Prostate gland (tissue), 2 donors: ENCODE measurements at regions of chr3 and their contacts with region 1.

Region 1: DNA sequence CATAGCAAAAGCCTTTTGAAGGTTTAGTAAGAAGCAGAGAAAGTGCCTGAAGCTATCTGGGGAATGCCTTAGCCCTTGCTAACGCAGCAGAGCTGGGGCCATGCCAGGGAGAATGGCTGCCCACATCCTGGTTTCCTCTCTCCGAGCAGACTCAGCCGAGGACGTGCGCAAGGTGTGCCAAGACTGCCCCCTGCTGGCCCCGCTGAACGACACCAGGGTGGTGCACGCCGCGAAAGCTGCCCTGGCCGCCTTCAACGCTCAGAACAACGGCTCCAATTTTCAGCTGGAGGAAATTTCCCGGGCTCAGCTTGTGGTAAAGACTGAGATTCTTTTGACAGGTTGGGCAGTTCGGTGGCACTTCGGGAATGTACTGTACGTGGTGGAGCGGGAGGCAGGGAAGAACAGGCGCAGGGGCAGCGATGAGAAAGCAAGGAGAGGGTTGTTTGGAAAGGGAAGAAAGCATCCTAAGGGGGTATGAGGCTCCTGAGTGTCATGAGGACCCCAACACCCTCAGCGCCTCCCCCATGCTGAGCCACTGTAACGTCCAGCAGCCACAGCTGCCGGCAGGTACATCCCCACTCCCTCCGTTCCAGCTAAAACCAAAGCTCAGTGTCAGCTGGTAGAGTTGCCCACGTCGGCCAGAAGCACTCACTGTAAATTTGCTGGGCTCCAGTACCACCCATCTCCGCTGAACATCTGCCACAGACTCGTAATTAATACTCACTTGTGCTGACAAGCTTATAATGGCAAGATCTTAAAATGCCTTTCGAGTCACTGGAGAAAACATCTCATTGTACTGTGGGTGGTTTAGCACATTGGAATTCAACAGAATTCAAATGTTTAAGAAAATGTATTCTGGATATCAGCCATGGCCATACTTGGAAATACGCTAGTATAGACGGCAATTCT is 4.4 kb downstream of the AHSG start:
- DNase-seq: peak; percentile 88
- H3K4me3 ChIP-seq: no peak overlapping the region
- H3K27ac ChIP-seq: no peak overlapping the region
- H3K4me1 ChIP-seq: no peaks in the 10 kb centered on the region
- H3K27me3 ChIP-seq: no peaks in the 10 kb centered on the region
- CTCF ChIP-seq: peak; percentile 62 to 93 (median 78)
- POLR2A ChIP-seq: no peak

Region 2: GRCh38 chr3:186427627-186428281 is 189.5 kb before region 1 on chr3:
- intact Hi-C with region 1: no loop called
- DNase-seq: no peak
- H3K4me3 ChIP-seq: no peak overlapping the region
- H3K27ac ChIP-seq: no peak overlapping the region
- H3K4me1 ChIP-seq: no peaks in the 10 kb centered on the region
- H3K27me3 ChIP-seq: no peaks in the 10 kb centered on the region
- CTCF ChIP-seq: no peak
- POLR2A ChIP-seq: no peak

Region 3: DNA sequence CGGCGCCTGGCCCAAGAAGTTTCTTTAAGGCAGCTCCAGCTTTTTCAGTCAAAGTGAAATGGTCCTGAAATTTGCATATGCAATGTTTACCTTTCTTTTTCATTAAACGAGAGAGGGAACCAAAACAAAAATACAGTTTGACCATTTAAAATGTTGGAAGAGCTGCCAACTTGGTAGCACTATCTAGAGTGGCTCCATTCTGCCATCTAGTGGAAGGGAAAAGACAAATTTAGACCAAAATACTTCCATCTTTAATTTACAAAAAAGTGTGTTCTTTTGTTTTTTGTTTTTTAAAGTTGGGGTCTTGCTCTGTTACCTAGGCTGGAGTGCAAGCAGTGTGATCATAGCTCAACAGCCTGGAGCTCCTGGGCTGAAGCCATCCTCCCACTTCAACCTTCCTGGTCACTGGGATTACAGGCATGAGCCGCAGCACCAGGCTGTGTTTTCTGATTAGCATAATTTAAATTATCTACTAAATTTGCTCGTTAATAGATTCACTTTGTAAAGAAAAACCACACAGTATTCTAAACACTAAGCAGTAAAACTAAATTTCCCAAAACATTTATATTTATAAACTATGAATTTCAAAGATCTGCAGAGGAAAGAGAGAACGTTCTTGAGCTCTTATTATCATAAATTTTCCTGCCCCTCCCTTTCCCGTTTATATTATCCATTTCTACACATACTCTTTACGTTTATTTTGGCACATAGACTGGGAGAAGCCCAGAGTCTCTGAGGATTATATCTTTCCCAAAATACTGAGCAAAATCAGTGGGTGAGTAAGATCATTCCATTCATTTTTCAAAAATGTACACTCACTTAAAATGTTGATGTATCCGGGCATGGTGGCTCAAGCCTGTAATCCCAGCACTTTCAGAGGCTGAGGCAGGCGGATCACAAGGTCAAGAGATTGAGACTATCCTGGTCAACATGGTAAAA is 204.4 kb after region 1 on chr3:
- intact Hi-C with region 1: loop called (anchors 5 kb)
- DNase-seq: no peak
- H3K4me3 ChIP-seq: no peak overlapping the region
- H3K27ac ChIP-seq: no peak overlapping the region
- H3K4me1 ChIP-seq: no peaks in the 10 kb centered on the region
- H3K27me3 ChIP-seq: no peaks in the 10 kb centered on the region
- CTCF ChIP-seq: peak; percentile 36 to 73 (median 64)
- POLR2A ChIP-seq: no peak

Region 4: DNA sequence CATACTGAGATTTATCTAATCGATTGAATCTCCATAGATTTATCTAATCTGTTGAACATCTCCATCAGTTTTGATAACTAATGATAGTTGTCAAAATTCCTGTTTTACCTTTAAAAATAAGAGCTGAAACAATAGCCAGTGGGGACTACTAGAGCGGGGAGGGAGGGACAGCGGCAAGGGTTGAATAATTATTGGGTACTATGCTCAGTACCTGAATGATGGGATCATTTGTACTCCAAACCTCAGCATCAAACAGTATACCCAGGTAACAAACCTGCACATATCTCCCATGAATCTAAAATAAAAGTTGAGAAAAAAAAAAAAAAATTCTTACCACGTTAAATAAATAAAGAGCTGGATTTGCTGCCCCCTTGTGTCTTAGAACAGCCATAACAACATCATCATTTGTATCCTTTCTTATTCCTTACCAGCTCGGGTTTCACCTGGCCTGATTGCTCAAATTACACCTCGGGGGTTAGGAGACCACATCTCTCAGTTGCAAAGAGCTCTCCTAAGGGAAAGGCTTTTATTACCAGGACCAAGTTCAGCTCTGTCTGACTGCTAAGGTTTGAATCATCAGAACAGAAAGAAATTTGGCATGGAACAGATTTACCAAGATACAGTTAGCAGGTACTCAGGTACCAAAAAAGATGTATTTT is 547.7 kb after region 1 on chr3:
- intact Hi-C with region 1: loop called (anchors 10 kb)
- DNase-seq: peak; percentile 54
- H3K4me3 ChIP-seq: no peak overlapping the region
- H3K27ac ChIP-seq: no peak overlapping the region
- H3K4me1 ChIP-seq: no peaks in the 10 kb centered on the region
- H3K27me3 ChIP-seq: no peaks in the 10 kb centered on the region
- CTCF ChIP-seq: peak in 3 of 4 experiments; percentile 68 to 77 (median 77)
- POLR2A ChIP-seq: no peak